Posterior vena cava (tissue), 2 donors: ENCODE measurements at regions of chr6 and their contacts with region 1.

Region 1: GRCh38 chr6:160455541-160456213 is 107.5 kb downstream of the SLC22A3 start:
- DNase-seq: no peak

Region 2: GRCh38 chr6:160088069-160088783 is 367.5 kb before region 1 on chr6:
- intact Hi-C with region 1: loop called (anchors 5 to 10 kb)
- DNase-seq: peak; percentile 85

Region 3: DNA sequence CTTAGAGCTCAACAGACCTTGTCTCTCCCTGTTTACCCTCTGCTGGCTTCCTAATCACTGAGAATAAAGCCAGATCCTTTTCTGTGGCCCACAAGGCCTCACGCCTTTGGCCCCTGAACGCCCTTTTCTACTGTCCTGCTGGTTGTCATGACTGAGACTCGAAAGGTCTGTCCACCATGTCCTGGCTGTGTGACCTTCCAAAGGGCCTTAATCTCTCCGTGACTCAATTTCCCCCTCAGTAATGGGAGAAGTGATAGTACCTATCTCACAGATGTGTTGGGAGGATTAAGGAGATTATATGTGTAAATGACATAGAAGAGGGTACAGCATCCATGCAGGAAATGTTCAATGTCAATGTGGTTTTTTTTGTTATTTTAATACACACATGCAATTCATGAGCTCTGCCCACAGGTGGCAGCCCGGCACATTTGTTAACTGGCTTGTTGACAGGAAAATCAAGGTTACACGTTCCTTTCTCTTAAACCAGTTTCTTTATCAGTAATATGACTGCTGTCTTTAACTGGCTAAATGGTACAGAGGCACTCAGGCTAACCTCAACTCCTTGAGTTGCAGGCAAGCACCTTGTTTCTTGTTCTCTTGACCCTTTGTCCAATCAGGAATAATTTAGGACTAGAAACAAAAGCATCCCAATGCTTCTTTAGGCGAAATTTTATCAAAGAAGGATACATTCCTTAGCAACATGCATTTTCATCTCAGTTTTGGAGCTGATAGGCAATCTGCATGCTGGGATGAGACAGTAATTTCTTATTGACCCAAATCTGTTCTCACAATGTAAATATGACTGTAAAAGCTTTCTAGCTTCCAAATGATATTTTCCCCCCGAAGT is 317.5 kb before region 1 on chr6:
- intact Hi-C with region 1: loop called (anchors 2 to 10 kb)
- DNase-seq: no peak

Region 4: GRCh38 chr6:160534050-160534696 is 78.5 kb after region 1 on chr6:
- intact Hi-C with region 1: loop called in 1 of 2 experiments (anchors 2 kb)
- DNase-seq: no peak